ENCODE measurements at regions of chr22 and their contacts with region 1.

Region 1: GRCh38 chr22:39528681-39529486 is 3.7 kb downstream of the RPS19BP1 start:
- DNase-seq: peak; percentile 91
- ATAC-seq: peak; percentile 30 to 39

Region 2: DNA sequence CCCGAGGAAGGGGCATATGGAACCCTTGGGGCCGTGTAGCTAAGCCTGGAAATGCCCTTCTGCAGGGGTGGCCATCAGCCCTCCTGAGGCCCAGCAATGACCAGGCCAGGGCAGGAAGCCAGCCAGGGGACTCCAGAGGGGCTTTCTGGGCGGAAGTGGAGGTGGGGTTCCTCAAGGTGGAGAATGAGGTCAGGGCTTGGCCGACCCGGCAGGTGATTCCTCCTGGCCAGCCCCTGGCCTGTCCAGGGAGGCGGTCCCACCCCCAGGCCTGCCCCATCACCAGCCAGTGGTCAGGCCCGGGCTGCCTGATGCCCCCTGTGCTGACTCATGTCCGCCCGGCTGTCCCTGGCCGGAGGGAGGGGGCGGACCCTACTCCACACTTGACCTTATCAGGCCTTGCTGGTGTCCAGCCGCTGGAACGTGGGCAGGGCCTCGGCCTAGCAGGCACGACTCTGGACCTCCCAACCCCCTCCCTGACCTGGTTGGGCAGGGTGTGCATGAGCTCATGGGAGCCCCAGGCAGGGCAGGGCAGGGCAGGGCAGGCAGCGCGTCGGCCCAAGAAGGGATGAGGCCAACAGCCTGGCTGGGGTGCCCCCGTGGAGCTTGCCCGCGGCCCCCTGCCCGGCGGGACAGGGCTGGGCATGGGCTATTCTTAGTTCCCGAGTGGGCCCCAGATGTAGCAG is 245.4 kb before region 1 on chr22:
- intact Hi-C with region 1: no loop called
- DNase-seq: peak; percentile 85
- ATAC-seq: peak; percentile 85 to 91

Region 3: DNA sequence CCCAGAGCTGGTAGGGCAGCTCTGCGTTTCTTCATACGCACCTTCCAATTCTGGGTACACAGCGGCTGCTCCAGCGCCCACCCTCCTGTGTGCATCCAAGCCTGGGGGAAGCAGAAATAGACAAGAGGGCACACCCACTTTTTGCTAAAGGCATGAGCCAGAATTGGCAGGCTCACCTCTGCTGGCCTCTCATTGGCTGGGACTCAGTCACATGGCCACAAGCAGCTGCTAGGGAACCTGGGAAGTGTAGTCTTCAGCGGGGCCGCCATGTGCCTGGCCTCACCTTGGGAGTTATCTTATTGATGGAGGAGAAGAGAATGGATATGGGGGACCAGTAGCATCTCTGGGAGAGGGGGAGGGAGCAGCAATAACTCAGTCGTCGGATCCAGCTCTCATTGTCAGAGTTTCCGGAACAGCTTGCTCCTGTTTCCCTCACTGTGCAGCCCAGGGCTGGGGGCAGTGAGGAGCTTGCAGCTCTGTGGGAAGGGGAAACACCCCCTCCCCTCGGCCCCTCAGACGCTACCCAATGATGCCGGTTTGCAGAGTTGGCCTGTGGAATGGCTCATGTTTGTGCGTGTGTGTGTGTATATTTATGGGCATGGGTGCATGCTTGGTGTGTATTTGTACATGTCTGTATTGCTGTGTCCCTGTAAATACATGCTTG is 38.6 kb before region 1 on chr22:
- intact Hi-C with region 1: loop called (anchors 5 kb)
- DNase-seq: peak; percentile 88
- ATAC-seq: peak; percentile 91

Measured in left cardiac atrium (tissue), 4 donors.